Left ventricle myocardium superior (tissue), 1 donor: ENCODE measurements at regions of chr2 and their contacts with region 1.

Region 1: DNA sequence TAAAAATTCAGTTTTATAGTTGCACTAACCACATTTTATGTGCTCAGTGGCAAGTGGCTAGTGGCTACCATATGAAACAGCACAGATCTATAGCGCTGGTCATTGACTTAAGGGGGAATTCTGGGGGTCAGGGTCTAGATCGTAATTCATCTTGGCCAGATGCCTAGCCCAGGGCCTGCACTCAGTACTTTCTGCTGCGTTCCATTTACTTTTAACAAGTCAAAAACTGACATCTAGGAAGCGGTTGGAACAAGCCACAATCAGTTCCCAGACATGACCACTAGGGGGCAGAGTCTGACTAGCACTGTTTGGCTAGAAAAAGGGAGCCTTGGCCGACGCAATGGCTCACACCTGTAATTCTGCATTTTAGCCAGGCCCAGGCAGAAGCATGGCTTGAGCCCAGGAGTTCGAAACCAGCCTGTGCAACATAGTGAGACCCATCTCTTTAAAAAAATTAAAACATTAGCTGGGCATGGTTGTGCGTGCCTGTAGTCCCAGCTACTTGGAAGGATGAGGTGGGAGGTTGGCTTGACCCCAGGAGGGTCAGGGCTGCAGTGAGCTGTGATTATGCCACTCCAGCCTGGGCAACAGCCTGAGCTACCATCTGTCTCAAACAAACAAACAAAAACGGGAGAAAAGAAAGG is 9.0 kb upstream of the TMBIM1 start:
- DNase-seq: peak; percentile 76
- ATAC-seq: peak; percentile 84

Region 2: GRCh38 chr2:218357236-218358159 is 56.2 kb after region 1 on chr2:
- intact Hi-C with region 1: loop called (anchors 10 kb)
- DNase-seq: no peak
- ATAC-seq: no peak

Region 3: DNA sequence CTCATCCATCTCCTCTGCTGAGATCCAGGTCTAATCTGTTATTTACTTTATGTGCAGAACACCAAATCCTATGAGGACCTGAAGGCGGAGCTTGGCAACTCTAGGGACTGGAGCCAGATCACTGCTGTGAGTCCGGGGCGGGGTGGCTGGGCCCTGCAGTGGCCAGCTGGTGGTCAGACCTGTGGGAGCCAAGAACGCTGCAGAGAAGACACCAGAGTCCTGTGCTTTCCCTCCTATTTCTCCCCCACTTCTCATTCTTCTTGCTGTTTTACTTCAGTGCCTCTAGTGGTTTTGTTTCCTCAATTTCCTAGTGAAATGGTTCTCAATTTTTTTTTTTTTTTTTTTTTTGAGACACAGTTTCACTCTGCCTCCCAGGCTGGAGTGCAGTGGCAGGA is 137.3 kb after region 1 on chr2:
- intact Hi-C with region 1: no loop called
- DNase-seq: peak; percentile 51
- ATAC-seq: peak; percentile 51